Left colon (tissue), 2 donors: ENCODE measurements at regions of chr14 and their contacts with region 1.

Region 1: GRCh38 chr14:26984311-26985177 is 386.7 kb upstream of the NOVA1 start:
- DNase-seq: peak; percentile 39 to 70
- ATAC-seq: peak; percentile 63

Region 2: GRCh38 chr14:26163791-26164190 is 820.8 kb before region 1 on chr14:
- intact Hi-C with region 1: loop called in 1 of 2 experiments (anchors 10 kb)
- DNase-seq: no peak
- ATAC-seq: peak; percentile 84